Ascending aorta (tissue), 2 donors: ENCODE measurements at regions of chr3 and their contacts with region 1.

Region 1: GRCh38 chr3:149512209-149512782 is 37.8 kb downstream of the TM4SF4 start:
- DNase-seq: peak in 1 of 2 donors; percentile 83
- H3K4me3 ChIP-seq: no peak overlapping the region
- H3K27ac ChIP-seq: no peak overlapping the region
- H3K4me1 ChIP-seq: peaks cover 1 to 20% of the 10 kb centered on the region in 2 donors
- H3K27me3 ChIP-seq: no peaks in the 10 kb centered on the region
- CTCF ChIP-seq: peak; percentile 66 to 85 (median 71)

Region 2: DNA sequence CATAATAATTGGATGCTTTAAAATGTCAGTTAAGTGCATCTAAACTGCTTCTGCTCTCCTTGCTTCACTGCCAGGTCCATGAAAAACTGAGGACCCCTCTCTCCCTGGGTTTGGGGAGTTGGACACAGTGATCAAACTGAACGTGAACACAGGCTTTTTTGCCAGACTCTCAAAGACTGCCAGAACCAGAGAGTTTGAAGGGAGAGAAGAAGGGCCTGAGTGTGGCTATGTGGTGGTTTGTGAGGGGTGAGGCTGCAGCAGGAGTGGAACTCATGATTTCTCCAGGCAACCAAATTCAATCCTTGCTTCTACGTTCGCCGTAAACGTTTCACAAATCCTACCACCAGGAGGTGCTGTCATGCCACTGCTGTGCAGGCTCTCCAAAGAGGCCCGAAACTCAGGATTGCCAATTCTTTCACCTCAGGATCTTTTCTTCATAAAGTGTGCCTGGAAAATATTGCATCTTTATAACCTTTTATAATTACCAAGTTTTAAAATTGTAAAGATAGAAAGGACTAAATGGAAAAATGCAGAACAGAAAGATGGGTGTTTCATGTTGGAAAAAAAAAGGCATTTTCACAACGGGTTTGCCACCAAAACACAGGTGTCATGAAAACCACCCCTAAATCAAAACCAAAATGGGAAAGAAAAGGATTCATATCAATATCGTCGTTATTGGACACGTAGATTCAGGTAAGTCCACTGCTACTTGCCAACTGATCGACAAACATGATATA is 18.1 kb before region 1 on chr3:
- intact Hi-C with region 1: loop called (anchors 2 kb)
- DNase-seq: peak in 1 of 2 donors; percentile 81
- H3K4me3 ChIP-seq: no peak overlapping the region
- H3K27ac ChIP-seq: no peak overlapping the region
- H3K4me1 ChIP-seq: peaks cover 0 to 4% of the 10 kb centered on the region in 2 donors
- H3K27me3 ChIP-seq: no peaks in the 10 kb centered on the region
- CTCF ChIP-seq: peak; percentile 75 to 89 (median 85)